ENCODE measurements at regions of chr19 and their contacts with region 1.

Region 1: GRCh38 chr19:47035127-47036096 is 13.0 kb downstream of the TMEM160 start:
- DNase-seq: peak; percentile 96
- H3K4me3 ChIP-seq: peak overlapping the region; percentile 48 to 64
- H3K27ac ChIP-seq: peak overlapping the region; percentile 28 to 71; a peak in 2 of 4 replicates
- H3K4me1 ChIP-seq: peaks cover 0 to 5% of the 10 kb centered on the region in 2 experiments; a peak in 1 of 4 replicates
- H3K27me3 ChIP-seq: no peaks in the 10 kb centered on the region
- CTCF ChIP-seq: peak; percentile 80
- EP300 ChIP-seq: no peak
- RAD21 ChIP-seq: peak; percentile 57

Region 2: GRCh38 chr19:47019431-47020041 is 15.9 kb before region 1 on chr19 and contains the start of gene NPAS1:
- CTCF ChIA-PET with region 1: interaction called, 98 read pairs
- POLR2A ChIA-PET with region 1: no interaction called
- DNase-seq: peak; percentile 75
- H3K4me3 ChIP-seq: peak within 1 kb of the TSS; percentile 35 to 61
- H3K27ac ChIP-seq: no peak within 1 kb of the TSS
- H3K4me1 ChIP-seq: peaks cover 3 to 19% of the 10 kb centered on the region in 2 experiments; a peak in 2 of 4 replicates
- H3K27me3 ChIP-seq: peaks cover 39% of the 10 kb centered on the region
- CTCF ChIP-seq: no peak
- EP300 ChIP-seq: no peak
- RAD21 ChIP-seq: no peak
- polyA plus RNA-seq, gene NPAS1: 1.0 and 1.1 TPM in 2 replicates

Region 3: GRCh38 chr19:47047763-47048405 is 12.5 kb after region 1 on chr19:
- CTCF ChIA-PET with region 1: interaction called, 11 read pairs
- POLR2A ChIA-PET with region 1: interaction called, 3 read pairs
- DNase-seq: peak; percentile 98
- H3K4me3 ChIP-seq: peak overlapping the region; percentile 81 to 86
- H3K27ac ChIP-seq: peak overlapping the region in 1 of 2 experiments; percentile 70; a peak in 2 of 4 replicates
- H3K4me1 ChIP-seq: peaks cover 4 to 5% of the 10 kb centered on the region in 2 experiments; a peak in 2 of 4 replicates
- H3K27me3 ChIP-seq: no peaks in the 10 kb centered on the region
- CTCF ChIP-seq: no peak
- EP300 ChIP-seq: no peak
- RAD21 ChIP-seq: no peak

Measured in SK-N-SH (cell line).